ENCODE measurements at regions of chr18 and their contacts with region 1.

Region 1: DNA sequence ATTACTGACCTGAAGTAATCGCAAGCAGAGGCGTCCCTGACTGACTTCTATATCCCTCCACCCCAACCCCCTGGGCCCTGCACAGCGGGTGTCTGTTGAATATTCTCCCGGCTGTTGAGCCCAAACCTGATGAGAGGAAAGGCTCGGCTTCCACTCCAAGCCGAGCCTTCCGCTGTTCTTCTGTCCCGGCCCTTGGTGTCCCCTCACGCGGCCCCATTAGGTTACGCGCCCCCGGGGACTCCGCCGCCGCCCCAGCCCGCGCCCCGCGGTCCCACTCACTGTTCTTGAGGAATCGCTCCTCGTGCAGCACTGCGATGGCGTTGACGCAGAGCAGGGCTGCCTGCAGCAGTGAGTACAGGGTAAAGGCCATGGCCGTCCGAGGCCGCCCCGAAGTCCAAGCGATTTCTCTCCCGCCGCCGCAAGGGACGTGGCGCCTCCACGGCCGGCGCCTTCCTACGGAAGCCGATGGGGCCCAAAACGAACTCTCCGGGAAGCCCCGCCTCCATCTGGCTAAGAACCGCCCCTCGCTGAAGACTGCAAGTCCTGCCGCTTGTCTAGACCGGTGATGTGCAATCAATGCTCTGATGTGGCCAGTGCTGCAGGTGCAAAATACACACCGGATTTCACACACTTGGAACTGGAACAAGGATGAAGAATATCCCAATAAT is at the start of gene IER3IP1:
- DNase-seq: peak; percentile 85 to 88
- H3K4me3 ChIP-seq: peak within 1 kb of the TSS; percentile 68
- H3K4me3 Mint-ChIP-seq: no peak within 1 kb of the TSS
- H3K27ac Mint-ChIP-seq: no peak within 1 kb of the TSS
- H3K4me1 ChIP-seq: no peaks in the 10 kb centered on the region
- H3K4me1 Mint-ChIP-seq: no peaks in the 10 kb centered on the region
- H3K27me3 ChIP-seq: no peaks in the 10 kb centered on the region
- H3K27me3 Mint-ChIP-seq: no peaks in the 10 kb centered on the region
- CTCF ChIP-seq: no peak
- total RNA-seq, gene IER3IP1: 5.0 and 5.9 TPM in 2 replicates

Region 2: GRCh38 chr18:47150029-47150823 is 25.8 kb before region 1 on chr18 and contains the start of gene HDHD2:
- CTCF ChIA-PET with region 1: no interaction called
- POLR2A ChIA-PET with region 1: no interaction called
- intact Hi-C with region 1: loop called (anchors 1 kb)
- DNase-seq: peak; percentile 58 to 76
- H3K4me3 ChIP-seq: peak within 1 kb of the TSS; percentile 69
- H3K4me3 Mint-ChIP-seq: peak within 1 kb of the TSS; percentile 83
- H3K27ac Mint-ChIP-seq: peak within 1 kb of the TSS; percentile 92
- H3K4me1 ChIP-seq: no peaks in the 10 kb centered on the region
- H3K4me1 Mint-ChIP-seq: peaks cover 21% of the 10 kb centered on the region
- H3K27me3 ChIP-seq: no peaks in the 10 kb centered on the region
- H3K27me3 Mint-ChIP-seq: no peaks in the 10 kb centered on the region
- CTCF ChIP-seq: no peak
- total RNA-seq, gene HDHD2: 14.7 and 15.5 TPM in 2 replicates

Measured in Caco-2 (cell line).